HepG2 (cell line): ENCODE measurements at regions of chr16 and their contacts with region 1.

Region 1: GRCh38 chr16:11273721-11274324 is 394 bp upstream of the PRM3 start:
- DNase-seq: peak; percentile 91
- ATAC-seq: peak; percentile 60
- H3K4me3 ChIP-seq: no peak overlapping the region
- H3K27ac ChIP-seq: peak overlapping the region; percentile 81
- H3K4me1 ChIP-seq: peaks cover 92% of the 10 kb centered on the region
- H3K27me3 ChIP-seq: no peaks in the 10 kb centered on the region
- CTCF ChIP-seq: no peak
- EP300 ChIP-seq: peak; percentile 11 to 68; a peak in 2 of 4 replicates
- POLR2A ChIP-seq: peak in 1 of 2 experiments; percentile 27; a peak in 1 of 4 replicates
- RAD21 ChIP-seq: 0 out of 2 replicates have a peak, but pooled peaks have one; percentile 22

Region 2: GRCh38 chr16:10918294-10919002 is 355.4 kb before region 1 on chr16:
- CTCF ChIA-PET with region 1: no interaction called
- POLR2A ChIA-PET with region 1: no interaction called
- in situ Hi-C with region 1: no loop called
- intact Hi-C with region 1: no loop called
- DNase-seq: peak; percentile 94
- ATAC-seq: peak; percentile 71
- H3K4me3 ChIP-seq: peak overlapping the region in 1 of 3 experiments; percentile 55; a peak in 2 of 6 replicates
- H3K27ac ChIP-seq: no peak overlapping the region
- H3K4me1 ChIP-seq: peaks cover 43% of the 10 kb centered on the region
- H3K27me3 ChIP-seq: peaks cover 0 to 9% of the 10 kb centered on the region in 2 experiments; a peak in 1 of 5 replicates
- CTCF ChIP-seq: peak; percentile 99
- EP300 ChIP-seq: no peak
- POLR2A ChIP-seq: no peak
- RAD21 ChIP-seq: peak; percentile 94

Region 3: DNA sequence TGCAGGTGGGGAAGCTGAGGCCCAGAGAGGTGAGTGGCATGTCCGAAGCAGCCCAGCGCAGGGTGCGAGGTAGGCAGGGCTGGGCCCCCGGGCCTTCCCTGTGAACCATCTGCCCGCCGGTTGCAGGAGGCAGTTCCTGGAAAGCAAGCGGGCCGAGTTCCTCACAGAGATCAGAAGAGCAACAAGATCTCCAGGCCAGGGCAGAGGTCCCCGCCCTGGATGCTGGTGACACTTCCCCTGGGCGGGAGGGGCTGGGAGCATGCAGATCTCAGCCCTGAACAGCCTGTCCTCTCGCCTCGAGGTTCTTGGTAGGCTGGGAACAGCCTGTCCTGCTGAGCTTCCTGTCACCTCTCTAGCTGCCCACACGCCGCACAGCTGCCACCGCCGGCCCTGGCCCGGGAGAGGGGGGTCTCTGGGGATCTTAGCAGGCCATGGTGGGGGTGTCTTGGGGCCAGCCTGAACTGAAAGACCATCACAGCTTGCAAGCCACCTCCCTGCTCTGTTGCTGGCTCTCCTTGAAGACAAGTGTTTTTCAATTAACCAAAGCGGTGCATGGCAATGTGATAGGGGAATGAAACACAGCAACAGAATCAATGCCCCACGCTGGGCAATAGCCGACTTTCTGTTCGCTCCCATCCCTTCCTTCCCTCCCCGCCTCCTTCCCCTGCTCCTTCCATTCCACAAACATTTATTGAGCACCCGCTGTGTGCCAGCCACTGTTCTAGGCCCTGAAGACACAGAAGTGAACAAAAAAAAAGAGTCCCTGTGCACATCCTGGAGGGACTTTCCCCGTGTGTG is 49.5 kb before region 1 on chr16:
- CTCF ChIA-PET with region 1: no interaction called
- POLR2A ChIA-PET with region 1: no interaction called
- in situ Hi-C with region 1: no loop called
- intact Hi-C with region 1: no loop called
- DNase-seq: peak; percentile 55
- ATAC-seq: peak; percentile 96
- H3K4me3 ChIP-seq: peak overlapping the region in 1 of 3 experiments; percentile 39; a peak in 1 of 6 replicates
- H3K27ac ChIP-seq: no peak overlapping the region
- H3K4me1 ChIP-seq: peaks cover 19% of the 10 kb centered on the region
- H3K27me3 ChIP-seq: peaks cover 5 to 25% of the 10 kb centered on the region in 2 experiments; a peak in 3 of 5 replicates
- CTCF ChIP-seq: no peak
- EP300 ChIP-seq: 0 out of 4 replicates have a peak, but pooled peaks of 1 of the 2 experiments have one; percentile 11
- POLR2A ChIP-seq: no peak
- RAD21 ChIP-seq: no peak

Region 4: GRCh38 chr16:11312718-11313492 is 39.1 kb after region 1 on chr16:
- CTCF ChIA-PET with region 1: no interaction called
- POLR2A ChIA-PET with region 1: interaction called, 45 read pairs
- in situ Hi-C with region 1: no loop called
- intact Hi-C with region 1: no loop called
- DNase-seq: peak; percentile 72
- ATAC-seq: no peak
- H3K4me3 ChIP-seq: peak overlapping the region; percentile 4 to 49 (median 34); a peak in 4 of 6 replicates
- H3K27ac ChIP-seq: peak overlapping the region; percentile 88
- H3K4me1 ChIP-seq: peaks cover 73% of the 10 kb centered on the region
- H3K27me3 ChIP-seq: no peaks in the 10 kb centered on the region
- CTCF ChIP-seq: no peak; the same call in 1 of the 2 replicates
- EP300 ChIP-seq: 0 out of 4 replicates have a peak, but pooled peaks of 1 of the 2 experiments have one; percentile 18
- POLR2A ChIP-seq: peak; percentile 11 to 46
- RAD21 ChIP-seq: no peak

Region 5: GRCh38 chr16:11386791-11387546 is 113.1 kb after region 1 on chr16:
- CTCF ChIA-PET with region 1: no interaction called
- POLR2A ChIA-PET with region 1: no interaction called
- in situ Hi-C with region 1: no loop called
- intact Hi-C with region 1: no loop called
- DNase-seq: peak; percentile 74
- ATAC-seq: peak; percentile 89
- H3K4me3 ChIP-seq: peak overlapping the region; percentile 4 to 56 (median 15); a peak in 3 of 6 replicates
- H3K27ac ChIP-seq: no peak overlapping the region
- H3K4me1 ChIP-seq: peaks cover 45% of the 10 kb centered on the region
- H3K27me3 ChIP-seq: peaks cover 36 to 85% of the 10 kb centered on the region in 2 experiments
- CTCF ChIP-seq: peak; percentile 91
- EP300 ChIP-seq: no peak
- POLR2A ChIP-seq: no peak
- RAD21 ChIP-seq: peak; percentile 90